Vagina (tissue), 2 donors: ENCODE measurements at regions of chrX and their contacts with region 1.

Region 1: DNA sequence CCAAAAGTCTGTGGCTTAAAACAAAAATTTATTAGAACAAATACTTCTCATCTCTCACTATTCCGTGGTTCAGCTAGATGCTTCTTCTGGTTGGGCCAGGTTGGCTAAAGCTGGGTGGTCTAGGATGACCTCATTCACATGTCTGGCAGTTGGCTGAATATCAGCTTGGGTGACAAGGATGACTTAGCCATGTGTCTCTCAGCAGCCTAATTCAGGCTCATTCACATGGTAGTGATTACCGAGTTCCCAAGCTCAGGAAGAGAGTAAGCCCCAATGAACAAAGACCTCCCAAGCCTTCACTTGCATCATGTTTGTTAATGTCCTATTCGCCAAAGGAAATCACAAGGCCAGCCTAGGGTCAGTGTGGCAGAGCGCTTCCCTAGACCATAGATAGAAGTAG is 119.4 kb downstream of the FANCB start:
- DNase-seq: no peak
- H3K4me3 ChIP-seq: no peak overlapping the region
- H3K27ac ChIP-seq: no peak overlapping the region
- H3K4me1 ChIP-seq: no peaks in the 10 kb centered on the region
- H3K27me3 ChIP-seq: no peaks in the 10 kb centered on the region
- CTCF ChIP-seq: no peak
- POLR2A ChIP-seq: no peak

Region 2: DNA sequence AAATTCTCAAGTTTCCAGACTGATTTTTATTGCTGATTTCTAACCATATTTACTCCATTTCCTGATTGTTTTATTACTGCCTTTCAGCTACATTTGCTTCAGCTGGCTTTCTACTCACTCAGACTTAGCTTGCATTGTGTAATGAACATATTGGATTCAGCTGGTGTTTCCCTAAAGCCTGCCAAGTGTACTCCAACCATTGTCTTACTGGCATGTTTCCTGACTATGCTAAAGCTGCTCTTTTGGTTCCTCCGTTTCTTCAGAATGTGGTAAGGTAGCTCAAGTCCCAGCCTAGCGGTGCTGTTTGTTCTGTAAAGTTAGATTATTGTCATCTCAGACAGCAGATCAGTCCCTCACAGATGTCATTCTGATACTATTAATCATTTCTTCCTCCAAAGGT is 277.2 kb before region 1 on chrX:
- intact Hi-C with region 1: no loop called
- DNase-seq: no peak
- H3K4me3 ChIP-seq: no peak overlapping the region
- H3K27ac ChIP-seq: no peak overlapping the region
- H3K4me1 ChIP-seq: peaks cover 5% of the 10 kb centered on the region
- H3K27me3 ChIP-seq: no peaks in the 10 kb centered on the region
- CTCF ChIP-seq: no peak
- POLR2A ChIP-seq: no peak

Region 3: DNA sequence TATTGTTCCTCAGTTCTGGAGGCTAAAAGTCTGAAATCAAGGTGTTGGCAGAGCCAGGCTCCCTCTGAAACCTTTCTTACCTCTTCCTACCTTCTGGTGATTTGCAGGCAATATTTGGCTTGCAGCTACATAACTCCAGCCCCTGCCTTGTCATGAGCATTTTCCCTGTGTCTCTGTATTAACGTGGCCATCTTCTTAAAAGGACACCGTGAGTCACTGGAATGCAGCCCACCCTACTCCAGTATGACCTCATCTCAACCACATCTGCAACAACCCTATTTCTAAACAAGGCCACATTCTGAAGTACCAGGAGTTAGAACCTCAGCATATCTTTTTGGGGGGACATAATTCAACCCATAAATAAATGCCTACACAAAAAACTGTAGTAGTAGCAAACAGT is 78.7 kb after region 1 on chrX:
- intact Hi-C with region 1: no loop called
- DNase-seq: no peak
- H3K4me3 ChIP-seq: no peak overlapping the region
- H3K27ac ChIP-seq: no peak overlapping the region
- H3K4me1 ChIP-seq: no peaks in the 10 kb centered on the region
- H3K27me3 ChIP-seq: no peaks in the 10 kb centered on the region
- CTCF ChIP-seq: no peak
- POLR2A ChIP-seq: no peak

Region 4: GRCh38 chrX:14883826-14884225 is 130.4 kb after region 1 on chrX:
- intact Hi-C with region 1: loop called (anchors 5 kb)
- DNase-seq: no peak
- H3K4me3 ChIP-seq: no peak overlapping the region
- H3K27ac ChIP-seq: no peak overlapping the region
- H3K4me1 ChIP-seq: no peaks in the 10 kb centered on the region
- H3K27me3 ChIP-seq: no peaks in the 10 kb centered on the region
- CTCF ChIP-seq: no peak
- POLR2A ChIP-seq: no peak

Region 5: DNA sequence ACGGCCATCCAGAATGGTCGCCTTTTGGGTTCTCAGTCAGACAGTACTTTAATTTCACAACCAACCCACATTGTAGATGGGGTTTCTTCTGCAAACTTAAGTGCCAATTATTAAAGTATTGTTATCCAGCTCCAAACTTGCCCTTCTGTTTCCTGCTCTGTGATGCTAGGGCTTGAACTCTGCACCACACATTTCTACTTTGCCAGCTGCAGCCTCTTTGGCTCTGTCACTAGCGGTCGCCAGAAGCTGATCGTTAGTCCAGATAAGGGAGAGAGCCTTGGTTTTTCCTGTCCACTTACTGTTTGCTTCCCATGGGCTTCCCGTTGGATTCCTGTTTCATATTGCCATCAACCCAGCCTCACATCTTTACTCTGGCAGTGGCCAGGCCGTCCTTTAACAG is 319.9 kb after region 1 on chrX:
- intact Hi-C with region 1: loop called (anchors 5 kb)
- DNase-seq: no peak
- H3K4me3 ChIP-seq: no peak overlapping the region
- H3K27ac ChIP-seq: no peak overlapping the region
- H3K4me1 ChIP-seq: no peaks in the 10 kb centered on the region
- H3K27me3 ChIP-seq: no peaks in the 10 kb centered on the region
- CTCF ChIP-seq: no peak
- POLR2A ChIP-seq: no peak